Right ventricle myocardium inferior (tissue), 1 donor: ENCODE measurements at regions of chr7 and their contacts with region 1.

Region 1: GRCh38 chr7:91034459-91035368 is 229.5 kb upstream of the FZD1 start:
- DNase-seq: peak; percentile 41
- ATAC-seq: peak; percentile 80

Region 2: GRCh38 chr7:90455163-90456030 is 579.3 kb before region 1 on chr7:
- intact Hi-C with region 1: loop called (anchors 5 kb)
- DNase-seq: no peak
- ATAC-seq: peak; percentile 63

Region 3: DNA sequence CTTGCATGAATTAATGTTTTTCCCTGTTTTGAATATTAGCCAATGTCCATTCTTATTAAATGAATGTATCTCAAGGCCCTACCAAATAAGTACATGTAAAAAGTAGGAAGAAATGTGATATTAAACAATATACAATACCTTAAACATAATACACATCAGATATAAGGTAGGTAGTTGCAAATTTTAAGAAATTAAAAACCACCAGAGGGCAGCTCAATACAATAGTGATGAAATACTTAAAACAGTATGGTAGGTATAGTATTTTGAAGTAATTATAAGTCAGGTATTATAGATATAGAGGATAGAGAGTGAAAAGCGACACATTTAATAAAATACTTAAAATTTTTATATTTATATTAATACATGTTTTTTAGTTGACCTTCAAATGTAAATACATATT is 482.2 kb before region 1 on chr7:
- intact Hi-C with region 1: loop called (anchors 2 kb)
- DNase-seq: no peak
- ATAC-seq: no peak

Region 4: DNA sequence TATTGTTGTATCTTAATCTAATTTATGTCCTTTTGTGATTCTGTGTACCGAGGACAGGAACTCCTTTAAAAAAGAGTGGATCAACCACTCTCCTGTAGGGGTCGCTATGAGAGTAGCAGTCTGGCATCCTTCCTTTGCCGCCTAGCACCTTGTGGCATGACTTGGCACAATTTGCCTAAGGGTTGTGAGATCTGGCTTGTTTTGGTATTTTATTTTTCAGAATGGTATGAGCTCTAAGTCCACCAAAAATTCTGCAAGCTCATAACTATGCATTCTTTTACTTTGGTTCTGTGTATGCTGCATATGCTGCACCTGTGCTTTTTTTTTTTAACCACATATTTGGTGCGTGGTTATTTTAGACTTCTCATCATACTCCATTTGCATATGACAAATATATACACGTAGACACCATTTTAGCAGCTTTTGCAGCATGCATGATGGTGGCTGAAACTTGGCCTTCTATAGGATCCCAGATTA is 325.8 kb before region 1 on chr7:
- intact Hi-C with region 1: loop called (anchors 10 kb)
- DNase-seq: no peak
- ATAC-seq: no peak

Region 5: GRCh38 chr7:90857603-90858002 is 177.1 kb before region 1 on chr7:
- intact Hi-C with region 1: loop called (anchors 2 kb)
- DNase-seq: no peak
- ATAC-seq: peak; percentile 80

Region 6: GRCh38 chr7:91082852-91083495 is 48.3 kb after region 1 on chr7:
- intact Hi-C with region 1: no loop called
- DNase-seq: no peak
- ATAC-seq: no peak